ENCODE measurements at regions of chr7 and their contacts with region 1.

Region 1: DNA sequence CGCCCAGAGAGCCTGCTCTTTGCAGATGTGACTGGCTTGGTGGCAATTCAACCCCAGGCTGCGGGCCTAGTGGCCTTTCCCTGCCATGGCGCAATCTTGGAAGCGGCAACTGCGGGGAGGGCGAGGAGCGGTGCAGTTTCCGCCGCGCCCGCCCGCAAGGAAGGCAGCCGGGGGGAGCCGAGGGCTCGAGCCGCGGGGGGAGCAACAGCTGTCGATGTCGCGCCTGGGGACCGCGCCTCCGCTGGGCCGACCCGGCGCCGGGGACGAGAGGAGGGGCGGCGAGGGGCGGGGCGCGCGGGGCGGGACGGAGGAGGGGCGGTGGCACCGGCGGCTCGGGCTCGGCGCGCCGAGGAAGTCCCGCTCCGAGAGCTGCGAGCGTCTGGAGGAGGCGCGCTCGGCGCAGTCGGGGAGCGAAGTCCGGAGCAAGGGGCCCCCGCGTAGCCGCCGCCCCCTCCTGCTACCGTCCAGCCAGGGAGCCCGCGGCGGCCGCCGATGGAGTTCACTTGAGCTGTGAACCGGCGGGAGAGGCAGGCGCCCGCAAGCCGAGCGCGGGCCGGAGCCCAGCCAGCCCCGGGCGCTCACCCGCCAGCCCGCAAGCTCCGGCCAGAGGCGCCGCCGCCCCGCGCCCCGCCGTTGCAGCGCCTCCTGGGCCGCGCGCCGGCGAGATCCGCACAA is 438.1 kb upstream of the GALNT17 start:
- DNase-seq: no peak
- ATAC-seq: peak; percentile 79
- H3K4me3 ChIP-seq: peak overlapping the region; percentile 90
- H3K27ac ChIP-seq: peak overlapping the region; percentile 86; the same call in 1 of the 2 replicates
- H3K4me1 ChIP-seq: no peaks in the 10 kb centered on the region; the same call in 1 of the 2 replicates
- H3K27me3 ChIP-seq: no peaks in the 10 kb centered on the region
- CTCF ChIP-seq: peak in 1 of 3 experiments; percentile 16; a peak in 1 of 6 replicates
- EP300 ChIP-seq: no peak
- POLR2A ChIP-seq: peak; percentile 78
- RAD21 ChIP-seq: no peak

Region 2: DNA sequence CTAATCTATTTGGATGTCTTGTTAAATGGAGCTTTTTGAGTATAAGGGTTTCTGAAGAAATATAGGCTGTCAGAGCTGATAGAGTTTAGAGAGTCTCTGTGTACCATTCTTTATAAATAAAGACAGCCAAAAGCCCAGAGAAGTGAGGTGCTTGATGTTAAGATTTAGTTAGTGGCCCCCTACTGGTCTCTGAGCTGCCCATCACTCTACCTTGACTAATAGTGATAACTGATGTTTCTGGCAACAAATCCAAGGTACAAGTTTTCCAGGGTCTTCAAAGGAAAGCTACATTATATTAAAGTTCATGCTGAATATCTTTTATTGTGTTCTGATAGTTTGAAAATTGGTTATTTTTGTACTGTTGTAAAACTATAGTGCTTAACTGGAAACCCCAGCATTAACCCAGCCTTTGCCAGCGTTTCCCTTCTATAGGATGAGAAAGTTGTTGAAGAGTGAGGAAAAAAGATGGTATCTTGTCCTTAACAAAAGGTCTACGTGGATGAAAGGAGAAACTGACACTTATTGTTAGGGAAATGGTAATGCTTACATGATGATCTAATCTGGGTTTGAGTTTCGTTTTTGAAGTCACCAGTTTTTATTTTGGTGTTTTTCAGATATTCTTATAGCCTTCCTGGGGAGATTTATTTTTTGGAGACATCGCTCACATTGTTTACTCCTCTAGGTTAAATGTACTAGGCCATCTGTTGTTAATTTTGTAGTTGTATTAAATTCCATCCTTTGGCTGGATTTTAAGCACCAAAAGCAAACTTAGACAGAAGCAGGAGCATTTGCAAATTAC is 1016.6 kb before region 1 on chr7:
- CTCF ChIA-PET with region 1: no interaction called
- POLR2A ChIA-PET with region 1: no interaction called
- RAD21 ChIA-PET with region 1: no interaction called
- SMC1A ChIA-PET with region 1: no interaction called
- in situ Hi-C with region 1: no loop called
- intact Hi-C with region 1: loop called (anchors 10 kb)
- DNase-seq: no peak
- ATAC-seq: peak; percentile 52
- H3K4me3 ChIP-seq: no peak overlapping the region
- H3K27ac ChIP-seq: peak overlapping the region; percentile 77
- H3K4me1 ChIP-seq: peaks cover 38% of the 10 kb centered on the region
- H3K27me3 ChIP-seq: no peaks in the 10 kb centered on the region
- CTCF ChIP-seq: peak; percentile 41 to 51 (median 45)
- EP300 ChIP-seq: no peak
- POLR2A ChIP-seq: no peak
- RAD21 ChIP-seq: peak; percentile 56

Region 3: DNA sequence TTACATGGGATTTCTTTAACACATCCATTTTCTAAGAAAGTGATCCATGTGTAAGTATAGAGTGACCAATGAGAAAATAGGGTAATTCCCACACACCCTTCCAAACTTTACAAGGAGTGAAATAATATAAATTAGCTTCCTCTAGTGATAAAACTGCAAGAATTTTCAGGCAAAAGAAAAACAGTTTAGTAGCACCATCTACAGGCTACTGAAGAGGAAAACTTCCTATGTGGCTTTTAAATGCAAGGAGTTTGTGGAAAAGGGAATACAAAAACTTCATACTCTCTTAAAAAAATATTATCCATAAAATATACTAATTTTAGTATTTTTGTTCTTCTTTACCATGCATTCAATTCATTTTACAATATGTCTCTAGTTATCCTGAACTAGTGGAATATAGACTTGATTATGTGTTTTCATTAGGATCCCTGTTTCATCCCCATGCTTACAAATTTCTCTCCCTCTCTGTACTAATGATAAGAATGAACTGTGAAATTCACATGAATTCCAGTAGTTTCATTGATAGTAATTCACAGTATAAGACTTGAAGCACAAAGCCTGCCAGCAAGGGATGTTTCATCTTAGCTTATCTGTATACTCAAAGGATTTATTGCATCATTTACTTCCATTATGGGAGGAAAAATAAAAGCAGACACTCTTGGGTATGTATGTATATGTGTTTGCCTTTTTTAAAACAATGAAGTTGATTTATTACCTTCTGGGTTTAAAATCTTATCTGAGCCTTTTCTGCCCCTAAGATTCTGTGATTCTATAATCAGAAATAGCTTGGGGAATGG is 652.7 kb before region 1 on chr7:
- CTCF ChIA-PET with region 1: interaction called, 22 read pairs
- POLR2A ChIA-PET with region 1: no interaction called
- RAD21 ChIA-PET with region 1: interaction called, 22 read pairs
- SMC1A ChIA-PET with region 1: interaction called, 14 read pairs
- in situ Hi-C with region 1: no loop called
- intact Hi-C with region 1: loop called (anchors 5 kb)
- DNase-seq: no peak
- ATAC-seq: no peak
- H3K4me3 ChIP-seq: no peak overlapping the region
- H3K27ac ChIP-seq: no peak overlapping the region
- H3K4me1 ChIP-seq: no peaks in the 10 kb centered on the region
- H3K27me3 ChIP-seq: no peaks in the 10 kb centered on the region
- CTCF ChIP-seq: peak; percentile 26 to 52 (median 27); a peak in 4 of 6 replicates
- EP300 ChIP-seq: no peak
- POLR2A ChIP-seq: no peak
- RAD21 ChIP-seq: peak; percentile 65

Region 4: DNA sequence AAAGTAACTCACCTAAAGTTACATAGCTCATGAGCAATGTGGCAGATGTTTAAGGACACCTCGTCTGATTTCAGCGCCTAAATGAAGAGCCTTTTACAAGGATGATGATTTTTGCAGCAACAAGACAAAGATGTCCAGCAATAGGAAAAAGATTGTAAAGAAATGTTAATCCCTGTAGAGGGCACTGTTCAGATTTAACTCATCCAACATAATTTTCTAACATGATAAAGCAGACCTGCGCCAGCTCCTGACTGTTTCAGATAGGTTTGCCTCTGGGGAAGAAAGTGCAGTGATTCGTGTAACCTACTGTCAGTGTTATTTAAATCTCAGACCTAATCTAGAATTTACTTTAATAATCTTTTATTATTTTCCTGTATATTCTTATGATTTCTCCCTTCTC is 500.3 kb before region 1 on chr7:
- CTCF ChIA-PET with region 1: interaction called, 6 read pairs
- POLR2A ChIA-PET with region 1: no interaction called
- RAD21 ChIA-PET with region 1: interaction called, 5 read pairs
- SMC1A ChIA-PET with region 1: interaction called, 3 read pairs
- in situ Hi-C with region 1: no loop called
- intact Hi-C with region 1: loop called (anchors 1 kb)
- DNase-seq: no peak
- ATAC-seq: no peak
- H3K4me3 ChIP-seq: no peak overlapping the region
- H3K27ac ChIP-seq: no peak overlapping the region
- H3K4me1 ChIP-seq: no peaks in the 10 kb centered on the region
- H3K27me3 ChIP-seq: no peaks in the 10 kb centered on the region
- CTCF ChIP-seq: peak; percentile 16 to 34 (median 22); a peak in 4 of 6 replicates
- EP300 ChIP-seq: no peak
- POLR2A ChIP-seq: no peak
- RAD21 ChIP-seq: peak; percentile 39; the same call in 1 of the 2 replicates

Region 5: DNA sequence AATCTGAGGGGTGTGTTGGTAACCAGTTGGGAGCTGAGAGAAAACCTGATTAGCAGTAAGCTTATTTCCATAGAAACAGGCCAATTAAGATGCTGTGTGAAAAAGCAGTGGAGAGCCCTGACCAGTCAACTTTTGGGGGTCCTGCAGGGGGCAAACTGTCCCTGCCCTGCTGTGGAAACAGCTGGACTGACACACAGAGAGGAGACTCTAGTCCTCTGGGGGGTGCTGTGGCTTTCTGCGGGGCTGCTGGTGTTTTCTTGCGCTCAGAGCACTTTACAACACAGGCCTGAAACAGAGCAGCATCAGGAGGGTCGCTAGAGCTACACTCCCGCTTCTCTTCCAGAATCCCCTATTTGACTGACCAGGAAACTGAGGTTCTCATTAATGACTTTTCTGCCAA is 108.8 kb before region 1 on chr7:
- CTCF ChIA-PET with region 1: interaction called, 12 read pairs
- POLR2A ChIA-PET with region 1: no interaction called
- RAD21 ChIA-PET with region 1: interaction called, 5 read pairs
- SMC1A ChIA-PET with region 1: interaction called, 13 read pairs
- in situ Hi-C with region 1: no loop called
- intact Hi-C with region 1: no loop called
- DNase-seq: no peak
- ATAC-seq: peak; percentile 49
- H3K4me3 ChIP-seq: no peak overlapping the region
- H3K27ac ChIP-seq: no peak overlapping the region
- H3K4me1 ChIP-seq: peaks cover 8% of the 10 kb centered on the region
- H3K27me3 ChIP-seq: no peaks in the 10 kb centered on the region
- CTCF ChIP-seq: peak in 2 of 3 experiments; percentile 17 to 31; a peak in 2 of 6 replicates
- EP300 ChIP-seq: no peak
- POLR2A ChIP-seq: no peak
- RAD21 ChIP-seq: peak; percentile 10; the same call in 1 of the 2 replicates

Region 6: DNA sequence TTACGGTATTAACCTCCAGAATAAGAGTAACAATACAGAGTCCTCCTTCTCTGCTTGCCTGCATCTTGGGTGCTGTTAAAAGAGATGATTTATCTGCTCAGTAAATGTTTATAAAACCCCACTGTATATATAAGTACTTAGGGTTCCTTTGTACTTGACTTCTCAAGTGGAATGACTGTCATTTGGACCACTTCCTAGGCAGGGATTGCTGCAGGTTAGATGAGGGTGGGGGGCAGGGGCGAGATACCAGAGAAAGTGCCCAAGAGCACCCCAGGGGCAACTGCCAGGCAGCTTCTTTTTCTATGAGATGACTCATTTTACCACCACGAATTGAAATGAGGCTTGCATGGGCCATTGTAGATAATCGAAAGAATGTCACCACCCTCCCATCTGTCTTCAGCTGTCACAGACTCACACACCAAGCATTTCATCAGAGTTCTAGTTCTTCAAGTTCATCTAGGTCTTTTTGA is 16.2 kb after region 1 on chr7:
- CTCF ChIA-PET with region 1: interaction called, 54 read pairs
- POLR2A ChIA-PET with region 1: interaction called, 5 read pairs
- RAD21 ChIA-PET with region 1: interaction called, 108 read pairs
- SMC1A ChIA-PET with region 1: interaction called, 43 read pairs
- in situ Hi-C with region 1: no loop called
- intact Hi-C with region 1: no loop called
- DNase-seq: peak; percentile 73
- ATAC-seq: peak; percentile 91
- H3K4me3 ChIP-seq: no peak overlapping the region
- H3K27ac ChIP-seq: peak overlapping the region; percentile 53; the same call in 1 of the 2 replicates
- H3K4me1 ChIP-seq: peaks cover 16% of the 10 kb centered on the region
- H3K27me3 ChIP-seq: no peaks in the 10 kb centered on the region
- CTCF ChIP-seq: no peak
- EP300 ChIP-seq: peak in 1 of 2 experiments; percentile 64; a peak in 1 of 4 replicates
- POLR2A ChIP-seq: no peak
- RAD21 ChIP-seq: no peak

Region 7: DNA sequence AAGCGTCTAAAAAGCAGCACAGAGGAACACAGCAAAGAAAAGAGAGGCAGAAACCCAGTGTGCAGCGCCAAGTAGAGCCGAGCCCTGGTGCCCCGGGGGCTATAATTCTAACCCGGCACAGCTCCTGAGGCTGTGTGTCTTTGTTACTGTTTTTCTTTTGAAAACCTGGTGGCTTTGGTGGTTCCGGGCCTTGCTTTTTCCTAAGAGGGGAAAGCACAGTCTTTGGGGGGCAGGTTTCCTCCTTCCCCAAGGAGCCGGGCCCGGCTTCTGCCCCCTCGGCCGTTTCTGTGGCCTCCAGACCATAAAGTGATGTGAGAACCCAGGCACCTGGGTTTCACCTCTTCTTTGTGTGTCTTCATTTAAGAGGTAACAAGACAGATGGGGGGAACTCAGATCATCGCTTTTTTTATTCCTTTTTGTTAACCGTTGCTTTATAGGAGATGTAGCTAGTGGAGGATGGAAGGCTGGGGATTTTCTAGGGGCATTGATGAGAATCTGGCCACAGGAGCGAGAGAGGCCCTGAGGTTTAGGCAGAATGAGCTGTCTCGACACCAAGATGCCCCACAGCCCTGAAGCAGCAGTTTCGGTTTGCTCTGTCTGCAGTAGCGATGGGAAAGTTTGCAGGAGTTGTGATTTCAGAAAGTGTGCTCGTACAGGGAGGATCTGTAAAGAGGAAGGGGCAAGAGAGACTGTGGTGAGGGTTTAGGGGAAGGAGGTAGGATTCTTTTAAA is 70.3 kb after region 1 on chr7:
- CTCF ChIA-PET with region 1: interaction called, 5 read pairs
- POLR2A ChIA-PET with region 1: no interaction called
- RAD21 ChIA-PET with region 1: interaction called, 15 read pairs
- SMC1A ChIA-PET with region 1: interaction called, 10 read pairs
- in situ Hi-C with region 1: no loop called
- intact Hi-C with region 1: no loop called
- DNase-seq: peak; percentile 98
- ATAC-seq: peak; percentile 88
- H3K4me3 ChIP-seq: peak overlapping the region; percentile 54
- H3K27ac ChIP-seq: peak overlapping the region; percentile 98
- H3K4me1 ChIP-seq: peaks cover 43% of the 10 kb centered on the region
- H3K27me3 ChIP-seq: no peaks in the 10 kb centered on the region
- CTCF ChIP-seq: no peak
- EP300 ChIP-seq: peak in 1 of 2 experiments; percentile 72
- POLR2A ChIP-seq: peak; percentile 27; the same call in 1 of the 2 replicates
- RAD21 ChIP-seq: 0 out of 2 replicates have a peak, but pooled peaks have one; percentile 16

Region 8: GRCh38 chr7:70926666-70927065 is 232.8 kb after region 1 on chr7:
- CTCF ChIA-PET with region 1: no interaction called
- POLR2A ChIA-PET with region 1: no interaction called
- RAD21 ChIA-PET with region 1: no interaction called
- SMC1A ChIA-PET with region 1: no interaction called
- in situ Hi-C with region 1: no loop called
- intact Hi-C with region 1: no loop called
- DNase-seq: no peak
- ATAC-seq: no peak
- H3K4me3 ChIP-seq: no peak overlapping the region
- H3K27ac ChIP-seq: no peak overlapping the region
- H3K4me1 ChIP-seq: no peaks in the 10 kb centered on the region
- H3K27me3 ChIP-seq: no peaks in the 10 kb centered on the region
- CTCF ChIP-seq: no peak
- EP300 ChIP-seq: no peak
- POLR2A ChIP-seq: no peak
- RAD21 ChIP-seq: no peak

Region 9: DNA sequence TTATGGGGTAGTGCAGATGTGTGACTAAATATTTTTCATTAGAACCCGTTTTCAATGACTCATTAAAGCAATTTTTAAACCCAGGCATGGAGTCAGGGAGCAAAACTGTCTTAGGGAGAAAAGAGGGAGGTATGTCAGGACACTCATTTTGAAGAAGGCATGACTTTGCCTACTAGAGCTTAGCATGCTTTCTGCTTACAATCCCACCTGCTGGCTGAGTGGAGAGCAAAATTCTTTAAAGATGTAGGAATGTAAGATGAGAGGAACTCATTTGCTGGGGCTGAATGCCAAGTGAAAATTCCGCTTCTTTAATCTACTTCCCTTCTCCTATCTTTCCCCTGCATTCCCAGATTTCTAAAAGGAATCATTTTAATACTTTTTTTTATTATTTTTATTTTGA is 670.7 kb after region 1 on chr7:
- CTCF ChIA-PET with region 1: no interaction called
- POLR2A ChIA-PET with region 1: no interaction called
- RAD21 ChIA-PET with region 1: no interaction called
- SMC1A ChIA-PET with region 1: no interaction called
- in situ Hi-C with region 1: no loop called
- intact Hi-C with region 1: no loop called
- DNase-seq: no peak
- ATAC-seq: no peak
- H3K4me3 ChIP-seq: no peak overlapping the region
- H3K27ac ChIP-seq: no peak overlapping the region
- H3K4me1 ChIP-seq: no peaks in the 10 kb centered on the region
- H3K27me3 ChIP-seq: no peaks in the 10 kb centered on the region
- CTCF ChIP-seq: no peak
- EP300 ChIP-seq: no peak
- POLR2A ChIP-seq: no peak
- RAD21 ChIP-seq: no peak

Measured in GM12878 (cell line).